ENCODE measurements at regions of chr22 and their contacts with region 1.

Region 1: GRCh38 chr22:42090596-42091454 is at the start of gene NDUFA6:
- DNase-seq: peak; percentile 99
- H3K4me3 Mint-ChIP-seq: peak within 1 kb of the TSS; percentile 98
- H3K27ac Mint-ChIP-seq: peak within 1 kb of the TSS; percentile 99
- H3K4me1 Mint-ChIP-seq: peaks cover 31% of the 10 kb centered on the region
- H3K27me3 Mint-ChIP-seq: no peaks in the 10 kb centered on the region
- total RNA-seq, gene NDUFA6: 122 to 126 TPM

Region 2: GRCh38 chr22:41966607-41967240 is 124.1 kb before region 1 on chr22:
- CTCF ChIA-PET with region 1: interaction called, 5 read pairs
- intact Hi-C with region 1: loop called (anchors 1 kb)
- DNase-seq: peak; percentile 69
- H3K4me3 Mint-ChIP-seq: no peak overlapping the region
- H3K27ac Mint-ChIP-seq: no peak overlapping the region
- H3K4me1 Mint-ChIP-seq: peaks cover 2% of the 10 kb centered on the region
- H3K27me3 Mint-ChIP-seq: no peaks in the 10 kb centered on the region

Region 3: GRCh38 chr22:42114721-42115120 is 23.9 kb after region 1 on chr22:
- CTCF ChIA-PET with region 1: interaction called, 8 read pairs
- intact Hi-C with region 1: loop called (anchors 2 kb)
- DNase-seq: peak; percentile 18
- H3K4me3 Mint-ChIP-seq: no peak overlapping the region
- H3K27ac Mint-ChIP-seq: no peak overlapping the region
- H3K4me1 Mint-ChIP-seq: peaks cover 8% of the 10 kb centered on the region
- H3K27me3 Mint-ChIP-seq: no peaks in the 10 kb centered on the region

Region 4: DNA sequence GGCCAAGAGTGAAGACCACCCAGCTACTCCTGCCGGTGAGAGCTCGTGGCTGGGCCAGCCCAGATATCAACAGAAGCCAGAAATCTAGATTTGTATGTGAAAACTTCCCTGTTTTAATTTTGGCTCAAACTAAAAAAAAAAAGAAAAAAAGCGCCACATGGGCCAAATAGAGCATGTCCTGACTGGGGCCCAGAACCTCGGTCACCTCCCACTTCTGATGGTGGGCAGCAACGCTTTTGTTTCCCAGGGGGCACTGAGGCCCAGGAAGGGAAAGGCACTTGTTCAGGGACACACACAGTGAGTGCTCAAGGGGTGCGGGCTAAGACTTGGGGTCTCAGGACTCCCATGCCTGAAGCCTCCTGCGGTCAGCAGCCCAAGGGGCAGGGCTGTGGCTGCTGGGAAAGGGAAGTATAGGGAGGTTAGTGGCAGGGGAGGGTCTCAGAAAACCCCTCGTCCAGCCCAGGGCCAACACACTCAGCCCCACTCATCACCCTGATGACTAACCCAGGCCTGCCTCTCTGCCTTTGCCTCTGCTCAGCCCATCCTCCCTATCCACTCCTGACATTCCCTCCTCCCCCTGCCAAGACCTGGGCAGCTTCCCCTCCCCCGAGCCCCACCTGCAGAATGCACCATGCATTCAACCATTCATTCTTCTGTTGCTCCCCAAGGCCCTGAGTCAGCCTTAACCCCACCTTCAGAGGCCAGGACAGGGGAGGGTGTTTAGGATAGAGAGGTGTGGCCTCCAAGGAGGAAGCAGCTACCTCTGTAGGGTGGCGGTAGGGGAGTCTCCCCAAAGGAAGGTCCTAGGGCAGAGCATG is 209.6 kb after region 1 on chr22:
- CTCF ChIA-PET with region 1: no interaction called
- intact Hi-C with region 1: no loop called
- DNase-seq: peak; percentile 79
- H3K4me3 Mint-ChIP-seq: peak overlapping the region; percentile 44
- H3K27ac Mint-ChIP-seq: peak overlapping the region; percentile 72
- H3K4me1 Mint-ChIP-seq: peaks cover 86% of the 10 kb centered on the region
- H3K27me3 Mint-ChIP-seq: no peaks in the 10 kb centered on the region

Region 5: GRCh38 chr22:42313804-42314581 is 223.2 kb after region 1 on chr22:
- CTCF ChIA-PET with region 1: interaction called, 5 read pairs
- intact Hi-C with region 1: loop called (anchors 1 kb)
- DNase-seq: peak; percentile 73
- H3K4me3 Mint-ChIP-seq: no peak overlapping the region
- H3K27ac Mint-ChIP-seq: no peak overlapping the region
- H3K4me1 Mint-ChIP-seq: peaks cover 46% of the 10 kb centered on the region
- H3K27me3 Mint-ChIP-seq: no peaks in the 10 kb centered on the region

Region 6: GRCh38 chr22:42520663-42521546 is 430.1 kb after region 1 on chr22:
- CTCF ChIA-PET with region 1: no interaction called
- intact Hi-C with region 1: loop called (anchors 1 kb)
- DNase-seq: no peak
- H3K4me3 Mint-ChIP-seq: peak overlapping the region; percentile 6
- H3K27ac Mint-ChIP-seq: no peak overlapping the region
- H3K4me1 Mint-ChIP-seq: peaks cover 13% of the 10 kb centered on the region
- H3K27me3 Mint-ChIP-seq: no peaks in the 10 kb centered on the region